Sigmoid colon (tissue), 7 donors: ENCODE measurements at regions of chr13 and their contacts with region 1.

Region 1: DNA sequence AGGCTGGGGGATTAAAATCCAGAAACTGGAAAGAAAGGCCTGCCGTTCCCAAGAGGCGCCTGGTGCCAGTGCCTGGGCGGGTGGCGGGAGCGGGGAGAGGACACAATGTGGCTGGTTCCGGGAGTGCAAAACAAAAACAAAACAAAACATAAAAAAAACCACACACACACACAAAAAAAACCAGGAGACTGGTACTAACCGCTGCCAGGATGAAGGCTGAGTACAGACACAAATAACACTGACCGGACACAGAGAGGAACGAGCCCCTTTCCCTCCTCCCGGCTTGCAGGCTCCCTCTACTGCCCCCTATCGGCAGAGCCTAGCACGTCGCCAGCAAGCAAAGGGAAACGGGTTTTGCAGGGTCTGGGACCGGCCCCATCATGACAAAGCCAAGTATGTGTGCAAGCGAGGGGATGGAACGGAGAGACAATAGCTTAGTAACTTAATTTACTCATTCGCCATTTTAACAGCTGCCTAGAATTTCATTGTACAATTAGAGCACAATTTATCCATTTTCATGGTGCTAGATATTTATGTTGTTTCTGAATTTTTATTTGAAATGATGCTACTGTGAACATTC is 17.9 kb upstream of the ZDHHC20 start:
- DNase-seq: peak; percentile 87
- H3K4me3 ChIP-seq: peak overlapping the region; percentile 27 to 45 (median 36)
- H3K27ac ChIP-seq: peak overlapping the region in 3 of 4 donors; percentile 35 to 53 (median 48)
- H3K4me1 ChIP-seq: peaks cover 0 to 21% (median 14%) of the 10 kb centered on the region in 4 donors
- H3K27me3 ChIP-seq: no peaks in the 10 kb centered on the region
- CTCF ChIP-seq: peak; percentile 75 to 93 (median 85)
- EP300 ChIP-seq: no peak
- POLR2A ChIP-seq: no peak

Region 2: GRCh38 chr13:21111546-21111945 is 365.4 kb before region 1 on chr13:
- intact Hi-C with region 1: loop called (anchors 1 kb)
- DNase-seq: peak; percentile 28
- H3K4me3 ChIP-seq: no peak overlapping the region
- H3K27ac ChIP-seq: no peak overlapping the region
- H3K4me1 ChIP-seq: no peaks in the 10 kb centered on the region
- H3K27me3 ChIP-seq: no peaks in the 10 kb centered on the region
- CTCF ChIP-seq: no peak
- EP300 ChIP-seq: no peak
- POLR2A ChIP-seq: no peak

Region 3: GRCh38 chr13:21297914-21298831 is 178.8 kb before region 1 on chr13:
- intact Hi-C with region 1: loop called (anchors 2 kb)
- DNase-seq: peak; percentile 90
- H3K4me3 ChIP-seq: peak overlapping the region; percentile 73 to 99 (median 90)
- H3K27ac ChIP-seq: peak overlapping the region; percentile 72 to 81 (median 80)
- H3K4me1 ChIP-seq: peaks cover 0 to 25% (median 15%) of the 10 kb centered on the region in 4 donors
- H3K27me3 ChIP-seq: no peaks in the 10 kb centered on the region
- CTCF ChIP-seq: peak; percentile 77 to 85 (median 82)
- EP300 ChIP-seq: no peak
- POLR2A ChIP-seq: peak in 1 of 2 donors; percentile 26

Region 4: DNA sequence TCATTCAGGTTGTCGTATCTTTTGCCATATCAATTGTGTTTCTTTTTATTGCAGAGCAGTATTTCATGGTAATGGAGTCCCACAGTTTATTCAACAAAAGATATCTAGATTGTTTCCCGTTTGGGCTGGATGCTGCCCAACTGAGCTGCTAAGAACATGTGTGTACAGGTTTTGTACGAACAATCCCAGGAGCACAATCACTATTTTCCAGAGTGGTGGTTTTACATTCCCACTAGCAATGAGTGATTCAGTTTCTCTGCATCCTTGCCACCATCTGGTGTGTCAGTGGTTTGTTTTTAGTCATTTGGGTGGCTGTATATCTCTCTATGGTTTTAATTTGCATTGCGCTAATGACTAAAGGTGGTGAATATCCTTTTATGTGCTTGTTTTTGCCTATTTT is 34.9 kb after region 1 on chr13:
- intact Hi-C with region 1: no loop called
- DNase-seq: no peak
- H3K4me3 ChIP-seq: no peak overlapping the region
- H3K27ac ChIP-seq: no peak overlapping the region
- H3K4me1 ChIP-seq: no peaks in the 10 kb centered on the region
- H3K27me3 ChIP-seq: no peaks in the 10 kb centered on the region
- CTCF ChIP-seq: no peak
- EP300 ChIP-seq: no peak
- POLR2A ChIP-seq: no peak